OCI-LY7 (cell line): ENCODE measurements at regions of chr13 and their contacts with region 1.

Region 1: DNA sequence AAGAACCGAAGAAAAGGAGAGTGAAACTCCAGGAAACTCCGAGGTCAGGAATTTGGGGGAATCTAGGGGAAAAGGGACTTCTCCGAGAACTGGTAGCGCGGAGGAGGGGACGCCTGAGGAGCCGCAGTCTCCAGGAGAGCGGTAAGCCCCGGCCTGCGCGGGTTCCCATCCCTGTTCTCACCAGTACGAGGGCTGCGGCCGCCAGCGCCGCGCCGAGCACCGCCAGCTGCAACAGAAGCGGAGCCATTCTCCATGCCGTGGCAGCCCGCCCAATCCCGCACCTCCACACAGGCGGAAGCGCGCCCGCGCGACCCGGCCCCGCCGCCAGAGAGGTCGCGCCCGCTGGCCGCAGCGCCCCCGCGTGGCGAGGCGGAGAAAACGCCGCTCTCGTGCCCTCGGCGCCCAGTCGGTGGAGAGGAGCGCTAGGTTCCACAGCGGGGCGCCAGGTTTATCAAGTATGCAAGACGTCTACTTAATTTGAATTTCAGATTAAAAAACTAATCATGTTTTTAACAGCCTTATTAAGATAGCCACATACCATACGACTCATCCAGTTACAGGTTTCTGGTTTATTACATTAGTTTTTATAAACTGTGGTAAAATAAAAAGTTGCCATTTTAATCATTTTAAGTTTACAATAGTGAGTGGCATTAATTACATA is at the start of gene ALG5:
- DNase-seq: peak; percentile 93
- H3K4me3 ChIP-seq: peak within 1 kb of the TSS; percentile 98
- H3K27ac ChIP-seq: peak within 1 kb of the TSS; percentile 91
- H3K4me1 ChIP-seq: peaks cover 26% of the 10 kb centered on the region
- CTCF ChIP-seq: peak; percentile 99
- total RNA-seq, gene ALG5: 23.8 and 25.3 TPM in 2 replicates

Region 2: GRCh38 chr13:36818804-36819738 is 180.1 kb before region 1 on chr13 and contains the start of gene RFXAP:
- CTCF ChIA-PET with region 1: no interaction called
- POLR2A ChIA-PET with region 1: interaction called, 4 read pairs
- intact Hi-C with region 1: loop called (anchors 1 kb)
- DNase-seq: peak; percentile 96
- H3K4me3 ChIP-seq: peak within 1 kb of the TSS; percentile 77
- H3K27ac ChIP-seq: peak within 1 kb of the TSS; percentile 63
- H3K4me1 ChIP-seq: peaks cover 32% of the 10 kb centered on the region
- CTCF ChIP-seq: no peak
- total RNA-seq, gene RFXAP: 10.0 and 11.8 TPM in 2 replicates

Region 3: DNA sequence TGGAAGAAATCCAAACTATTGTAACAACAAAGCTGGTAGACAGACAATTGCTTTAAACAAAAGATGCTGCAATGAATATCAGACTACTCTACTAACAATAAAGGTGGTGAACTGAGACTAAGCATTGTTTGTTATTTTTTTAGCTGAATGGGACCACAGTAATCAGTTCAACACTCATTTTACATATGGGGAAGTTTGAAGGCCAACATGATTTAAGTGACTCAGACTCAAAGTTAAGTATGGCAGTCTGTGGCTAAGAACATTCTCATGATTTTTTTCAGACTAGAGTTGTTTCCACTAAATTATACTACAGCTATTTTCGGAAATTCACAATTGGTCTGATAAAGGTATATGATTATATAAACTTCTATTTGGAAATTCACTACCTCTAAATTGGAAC is 11.8 kb after region 1 on chr13:
- CTCF ChIA-PET with region 1: no interaction called
- POLR2A ChIA-PET with region 1: interaction called, 25 read pairs
- intact Hi-C with region 1: no loop called
- DNase-seq: no peak
- H3K4me3 ChIP-seq: no peak overlapping the region
- H3K27ac ChIP-seq: no peak overlapping the region
- H3K4me1 ChIP-seq: peaks cover 3% of the 10 kb centered on the region
- CTCF ChIP-seq: no peak

Region 4: DNA sequence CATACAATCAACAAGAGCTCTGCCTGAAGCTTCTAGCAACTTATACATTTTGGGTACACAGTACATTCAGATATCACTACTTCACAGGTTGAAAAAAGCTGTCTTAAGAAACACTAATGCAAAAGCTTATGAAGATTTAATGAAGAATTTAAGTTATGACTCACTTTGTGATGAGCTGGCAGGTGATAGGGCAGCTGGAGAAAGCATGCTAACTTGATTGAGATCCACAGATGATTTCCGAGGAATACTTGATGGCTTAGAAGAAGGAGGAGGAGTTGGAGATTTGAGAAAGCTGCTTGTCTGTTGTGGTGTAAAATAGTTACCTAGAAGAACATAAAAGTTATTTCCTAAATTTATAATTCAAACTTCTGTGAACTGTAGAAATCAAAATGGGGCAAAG is 24.7 kb after region 1 on chr13:
- CTCF ChIA-PET with region 1: no interaction called
- POLR2A ChIA-PET with region 1: interaction called, 11 read pairs
- intact Hi-C with region 1: no loop called
- DNase-seq: no peak
- H3K4me3 ChIP-seq: no peak overlapping the region
- H3K27ac ChIP-seq: no peak overlapping the region
- H3K4me1 ChIP-seq: no peaks in the 10 kb centered on the region
- CTCF ChIP-seq: no peak

Region 5: DNA sequence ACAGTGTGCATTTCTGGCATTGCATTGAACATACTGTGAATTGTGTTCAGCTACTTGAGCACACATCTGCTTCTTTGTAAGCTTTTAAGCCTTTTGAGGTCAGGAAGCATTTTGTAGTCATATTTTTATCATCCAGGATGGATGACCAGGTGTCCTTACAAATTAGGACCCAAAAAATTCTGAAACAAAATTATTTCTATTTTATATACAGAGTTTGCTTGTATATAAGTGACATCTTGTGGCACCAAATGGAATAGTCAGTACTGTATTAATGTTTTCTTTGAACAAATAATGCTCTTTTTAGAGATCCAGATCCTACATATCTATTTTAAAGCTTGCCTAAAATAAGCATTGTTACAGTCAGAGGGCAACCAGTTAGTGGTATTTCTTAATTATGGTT is 69.8 kb after region 1 on chr13:
- CTCF ChIA-PET with region 1: interaction called, 3 read pairs
- POLR2A ChIA-PET with region 1: interaction called, 9 read pairs
- intact Hi-C with region 1: loop called (anchors 1 kb)
- DNase-seq: peak; percentile 68
- H3K4me3 ChIP-seq: no peak overlapping the region
- H3K27ac ChIP-seq: peak overlapping the region; percentile 58
- H3K4me1 ChIP-seq: peaks cover 35% of the 10 kb centered on the region
- CTCF ChIP-seq: peak; percentile 90